ENCODE measurements at regions of chr1 and their contacts with region 1.

Region 1: DNA sequence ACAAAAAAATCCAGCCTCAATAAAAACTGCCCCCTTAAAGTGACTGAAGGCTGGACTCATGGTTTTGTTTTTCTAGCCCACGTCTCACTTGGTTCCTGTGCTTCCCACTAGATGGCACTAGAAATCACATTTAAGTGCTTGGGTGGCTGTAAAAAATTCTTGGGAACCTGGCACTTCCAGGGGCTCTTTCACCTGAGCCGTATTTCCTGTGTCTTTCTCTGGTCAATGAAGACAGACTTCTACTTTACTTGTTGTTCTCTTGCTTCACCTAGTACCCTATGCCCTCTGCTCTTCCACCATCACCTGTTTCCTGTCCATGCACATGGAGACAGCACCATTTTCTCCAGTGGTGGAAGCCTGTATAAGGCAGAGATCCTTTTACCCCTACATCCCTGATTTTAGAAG is 20.0 kb downstream of the METTL13 start:
- DNase-seq: peak in 2 of 10 donors; percentile 10 to 38
- H3K4me3 ChIP-seq: no peak overlapping the region
- H3K27ac ChIP-seq: peak overlapping the region in 35 of 59 donors; percentile 3 to 76 (median 53)
- H3K27me3 ChIP-seq: no peaks in the 10 kb centered on the region
- CTCF ChIP-seq: peak; percentile 64 to 96 (median 88)

Region 2: GRCh38 chr1:171841050-171841940 is 39.8 kb after region 1 on chr1 and contains the start of gene DNM3:
- intact Hi-C with region 1: loop called (anchors 1 kb)
- DNase-seq: peak; percentile 89 to 97 (median 92)
- H3K4me3 ChIP-seq: peak within 1 kb of the TSS; percentile 65 to 100 (median 93)
- H3K27ac ChIP-seq: peak within 1 kb of the TSS; percentile 84 to 99 (median 96)
- H3K27me3 ChIP-seq: no peaks in the 10 kb centered on the region
- CTCF ChIP-seq: peak in 32 of 56 donors; percentile 5 to 57 (median 25)
- total RNA-seq, gene DNM3: 79.4 to 235 (median 160) TPM

Region 3: DNA sequence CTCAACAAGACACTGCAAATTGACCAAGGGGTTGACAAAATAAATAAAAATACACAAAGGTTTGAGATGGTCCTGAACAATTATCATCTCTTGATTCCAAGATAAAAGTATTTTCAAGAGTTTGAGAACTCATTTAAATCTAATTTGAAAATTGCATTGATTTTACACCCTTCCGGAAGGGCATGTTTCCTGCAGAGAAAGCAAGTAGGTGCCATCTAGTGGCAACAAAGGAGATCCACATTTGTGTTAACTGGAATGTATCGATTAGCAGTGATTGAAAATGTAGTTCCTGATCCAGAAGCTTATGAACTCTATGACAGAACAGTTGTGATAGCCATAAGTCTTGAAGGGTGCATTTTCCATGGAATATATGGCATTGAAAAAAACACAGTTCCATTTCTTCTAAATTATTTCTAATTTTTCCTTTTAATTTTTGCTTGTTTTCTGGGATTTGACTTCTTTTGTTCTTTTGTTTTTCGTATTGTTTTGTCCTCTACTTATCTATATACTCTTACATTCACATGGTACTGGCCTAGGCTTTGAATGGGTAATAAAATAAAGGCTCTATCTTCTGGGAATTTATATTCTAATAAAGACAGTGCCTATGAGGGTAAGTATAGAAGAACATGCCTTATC is 183.5 kb after region 1 on chr1:
- intact Hi-C with region 1: loop called (anchors 1 to 2 kb)
- DNase-seq: no peak
- H3K4me3 ChIP-seq: peak overlapping the region in 1 of 59 donors; percentile 13
- H3K27ac ChIP-seq: peak overlapping the region in 46 of 59 donors; percentile 1 to 77 (median 60)
- H3K27me3 ChIP-seq: no peaks in the 10 kb centered on the region
- CTCF ChIP-seq: peak; percentile 73 to 97 (median 89)

Region 4: DNA sequence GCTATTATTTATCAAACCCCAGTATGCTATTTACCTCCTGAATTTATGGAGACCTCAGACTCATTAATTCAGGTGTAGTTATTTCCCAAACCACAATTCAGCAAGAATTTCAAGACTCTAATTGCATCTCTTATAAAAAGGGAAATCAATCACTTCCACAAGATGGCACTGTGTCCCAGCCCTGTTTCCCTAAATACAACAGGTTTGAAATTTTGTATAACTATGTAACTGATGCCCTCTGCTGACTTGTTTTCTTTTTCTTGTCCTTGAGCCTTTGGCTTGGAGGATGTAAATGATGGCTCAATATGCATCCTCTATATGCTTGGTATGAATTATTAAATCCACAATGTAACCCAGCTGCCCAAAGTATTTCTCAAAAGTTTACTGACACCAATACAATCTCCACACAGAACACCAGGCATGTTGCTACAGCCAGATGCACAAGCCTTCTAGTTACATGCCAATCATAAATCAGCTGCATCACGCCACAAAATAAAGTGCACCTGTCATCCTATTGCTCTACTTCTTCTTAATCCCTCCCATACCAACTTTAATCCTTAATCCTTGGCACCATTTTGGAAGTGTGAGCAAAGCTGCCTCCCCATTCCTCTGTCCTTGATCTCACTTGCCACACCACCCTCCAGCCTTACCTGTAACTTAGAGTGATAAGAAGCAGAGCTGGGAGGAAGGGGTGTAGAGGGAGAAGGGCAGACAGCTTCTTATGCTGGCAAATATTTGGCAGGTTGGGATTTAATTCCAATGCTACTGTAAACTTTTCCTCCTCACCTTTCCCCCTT is 628.0 kb after region 1 on chr1:
- intact Hi-C with region 1: loop called in 1 of 2 experiments (anchors 5 kb)
- DNase-seq: peak in 2 of 10 donors; percentile 9 to 58
- H3K4me3 ChIP-seq: no peak overlapping the region
- H3K27ac ChIP-seq: no peak overlapping the region
- H3K27me3 ChIP-seq: no peaks in the 10 kb centered on the region
- CTCF ChIP-seq: peak; percentile 48 to 93 (median 80)

Region 5: DNA sequence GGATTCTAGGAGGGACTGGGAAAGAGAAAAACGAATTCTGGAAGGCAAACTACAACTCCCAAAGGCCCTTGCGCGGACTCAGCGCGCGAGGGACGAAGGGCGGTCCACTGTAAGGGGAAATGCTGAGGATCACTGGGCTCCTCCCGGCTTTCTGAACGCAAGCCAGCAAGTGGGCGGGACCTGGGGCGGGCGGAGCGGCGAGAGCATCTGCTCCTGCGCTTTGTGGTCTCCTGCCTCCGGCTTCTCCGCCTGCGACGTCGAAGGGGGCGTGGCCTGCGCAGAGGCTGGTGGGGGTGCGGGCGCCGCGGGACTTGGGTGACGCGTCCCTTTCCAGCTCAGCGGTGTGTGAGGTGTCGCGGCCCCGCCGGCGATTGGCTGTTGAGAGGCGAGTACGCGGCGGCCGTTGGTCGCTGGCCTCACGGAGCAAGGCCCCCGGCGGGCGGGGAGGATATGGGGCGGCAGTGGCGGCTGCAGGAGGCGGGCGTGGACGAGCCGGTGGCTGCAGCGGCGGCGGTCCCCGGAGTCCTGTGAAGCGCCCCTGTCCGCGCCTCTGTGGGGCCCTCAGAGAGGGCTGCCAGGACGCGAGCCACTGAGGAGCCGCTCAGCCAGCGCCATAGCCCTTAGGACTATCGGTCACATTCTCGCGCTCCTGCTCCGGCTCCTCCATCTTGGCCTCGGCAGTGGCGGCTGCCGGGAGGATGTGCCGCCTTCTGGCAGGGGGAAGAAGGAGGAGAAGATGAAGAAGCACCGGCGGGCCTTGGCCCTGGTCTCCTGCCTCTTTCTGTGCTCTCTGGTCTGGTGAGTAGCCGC is 731.4 kb after region 1 on chr1 and contains the start of gene SUCO:
- intact Hi-C with region 1: loop called in 1 of 2 experiments (anchors 10 kb)
- DNase-seq: peak; percentile 99 to 100 (median 99)
- H3K4me3 ChIP-seq: peak within 1 kb of the TSS; percentile 67 to 99 (median 93)
- H3K27ac ChIP-seq: peak within 1 kb of the TSS; percentile 93 to 100 (median 98)
- H3K27me3 ChIP-seq: no peaks in the 10 kb centered on the region
- CTCF ChIP-seq: peak in 32 of 56 donors; percentile 0 to 52 (median 22)
- total RNA-seq, gene SUCO: 24.2 to 46.6 (median 34.6) TPM

Measured in dorsolateral prefrontal cortex (tissue), 120 donors.